GM18951 (cell line): ENCODE measurements at regions of chr5 and their contacts with region 1.

Region 1: GRCh38 chr5:136202469-136203205 is 9.7 kb upstream of the SMIM32 start:
- POLR2A ChIP-seq: no peak

Region 2: GRCh38 chr5:135246923-135247795 is 955.5 kb before region 1 on chr5:
- in situ Hi-C with region 1: no loop called
- POLR2A ChIP-seq: no peak

Region 3: DNA sequence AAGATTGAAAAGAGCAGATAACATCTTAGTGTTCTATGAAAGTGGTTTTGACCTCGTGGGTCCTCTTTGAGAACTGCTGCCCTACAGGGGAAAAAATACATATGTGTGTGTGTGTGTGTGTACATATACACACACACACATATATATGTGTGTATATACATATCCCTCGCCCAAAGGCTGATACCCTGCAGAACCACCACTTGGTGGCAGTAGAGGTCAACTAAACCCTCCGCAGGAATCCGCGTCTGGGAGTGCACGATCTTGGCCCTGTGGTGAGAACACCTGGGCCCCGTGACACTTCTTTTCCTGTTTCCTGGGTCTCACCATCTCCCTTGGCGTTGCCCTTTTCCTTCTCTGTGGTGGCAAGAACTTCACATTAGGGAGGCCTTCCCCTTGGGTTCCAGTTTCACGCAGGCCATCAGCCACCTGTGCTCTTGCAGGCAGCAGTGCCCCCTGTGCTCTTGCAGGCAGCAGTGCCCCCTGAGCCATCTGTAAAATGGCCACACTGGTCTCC is 315.2 kb before region 1 on chr5:
- in situ Hi-C with region 1: loop called (anchors 10 kb)
- POLR2A ChIP-seq: no peak